Common myeloid progenitor, CD34-positive (primary cell): ENCODE measurements at regions of chr1 and their contacts with region 1.

Region 1: GRCh38 chr1:204446370-204447111 is 34.9 kb upstream of the PPP1R15B start:
- DNase-seq: peak; percentile 80 to 87 (median 81)
- H3K4me3 ChIP-seq: no peak overlapping the region
- H3K27ac ChIP-seq: no peak overlapping the region
- H3K4me1 ChIP-seq: peaks cover 0 to 35% (median 3%) of the 10 kb centered on the region in 4 experiments
- H3K27me3 ChIP-seq: no peaks in the 10 kb centered on the region

Region 2: DNA sequence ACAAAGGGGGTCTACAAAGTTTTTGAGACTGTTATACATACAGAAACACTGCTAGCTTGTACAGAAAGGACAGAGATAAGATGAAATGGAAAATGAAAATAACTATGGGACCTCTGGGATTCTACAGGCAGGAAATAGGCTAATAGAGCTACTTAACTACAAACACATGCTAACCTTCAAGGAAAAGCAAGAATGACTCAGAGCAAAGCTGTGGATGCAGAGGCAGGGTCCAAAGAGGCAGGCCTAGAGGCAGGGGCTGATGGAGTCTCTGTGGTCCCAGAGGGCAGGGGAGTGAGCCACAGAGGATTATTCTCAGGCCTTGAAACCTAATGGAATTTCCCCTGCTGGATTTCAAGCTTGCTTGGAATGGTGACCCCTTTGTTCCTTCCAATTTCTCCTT is 214.0 kb before region 1 on chr1:
- CTCF ChIA-PET with region 1: no interaction called
- POLR2A ChIA-PET with region 1: no interaction called
- DNase-seq: no peak
- H3K4me3 ChIP-seq: no peak overlapping the region
- H3K27ac ChIP-seq: no peak overlapping the region
- H3K4me1 ChIP-seq: no peaks in the 10 kb centered on the region
- H3K27me3 ChIP-seq: no peaks in the 10 kb centered on the region

Region 3: DNA sequence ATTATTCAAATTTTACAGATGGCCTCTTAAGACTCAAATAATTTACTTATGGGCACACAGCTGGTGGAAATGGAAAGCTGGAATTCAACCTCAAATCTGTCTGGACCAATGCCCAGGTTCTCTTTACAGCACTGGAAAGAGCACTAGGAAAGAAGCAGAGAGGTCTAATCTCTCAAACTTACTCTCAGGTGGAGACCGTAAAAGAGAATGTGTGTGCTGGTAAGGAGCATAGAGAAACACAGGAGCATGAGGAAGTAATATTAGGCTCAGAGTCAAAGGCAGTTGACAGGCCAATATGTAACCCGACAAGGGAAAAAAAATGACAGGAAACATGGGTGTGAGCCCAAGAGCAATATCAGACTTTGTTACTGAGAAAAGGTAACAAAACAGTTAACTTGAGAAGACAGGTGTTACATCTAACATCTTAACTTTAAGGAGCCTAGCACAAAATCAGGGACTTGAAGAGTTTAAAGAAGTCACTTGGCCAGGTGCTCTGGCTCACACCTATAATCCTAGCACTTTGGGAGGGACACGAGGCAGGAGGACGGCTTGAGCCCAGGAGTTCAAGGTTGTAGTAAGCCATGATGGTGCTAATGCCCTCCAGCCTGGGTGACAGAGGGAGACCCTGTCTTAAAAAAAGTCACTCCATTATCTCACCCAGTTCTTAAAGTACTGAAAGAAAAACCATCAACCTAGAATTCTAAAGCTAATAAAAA is 55.6 kb before region 1 on chr1:
- CTCF ChIA-PET with region 1: no interaction called
- POLR2A ChIA-PET with region 1: no interaction called
- DNase-seq: peak in 2 of 3 donors; percentile 45 to 60
- H3K4me3 ChIP-seq: peak overlapping the region in 2 of 7 experiments; percentile 11 to 23
- H3K27ac ChIP-seq: peak overlapping the region in 1 of 2 experiments; percentile 6
- H3K4me1 ChIP-seq: peaks cover 8 to 18% (median 12%) of the 10 kb centered on the region in 4 experiments
- H3K27me3 ChIP-seq: no peaks in the 10 kb centered on the region

Region 4: GRCh38 chr1:204431310-204432165 is 15.0 kb before region 1 on chr1:
- CTCF ChIA-PET with region 1: interaction called, 212 read pairs
- POLR2A ChIA-PET with region 1: no interaction called
- DNase-seq: peak; percentile 80 to 91 (median 85)
- H3K4me3 ChIP-seq: no peak overlapping the region
- H3K27ac ChIP-seq: no peak overlapping the region
- H3K4me1 ChIP-seq: no peaks in the 10 kb centered on the region
- H3K27me3 ChIP-seq: no peaks in the 10 kb centered on the region

Region 5: DNA sequence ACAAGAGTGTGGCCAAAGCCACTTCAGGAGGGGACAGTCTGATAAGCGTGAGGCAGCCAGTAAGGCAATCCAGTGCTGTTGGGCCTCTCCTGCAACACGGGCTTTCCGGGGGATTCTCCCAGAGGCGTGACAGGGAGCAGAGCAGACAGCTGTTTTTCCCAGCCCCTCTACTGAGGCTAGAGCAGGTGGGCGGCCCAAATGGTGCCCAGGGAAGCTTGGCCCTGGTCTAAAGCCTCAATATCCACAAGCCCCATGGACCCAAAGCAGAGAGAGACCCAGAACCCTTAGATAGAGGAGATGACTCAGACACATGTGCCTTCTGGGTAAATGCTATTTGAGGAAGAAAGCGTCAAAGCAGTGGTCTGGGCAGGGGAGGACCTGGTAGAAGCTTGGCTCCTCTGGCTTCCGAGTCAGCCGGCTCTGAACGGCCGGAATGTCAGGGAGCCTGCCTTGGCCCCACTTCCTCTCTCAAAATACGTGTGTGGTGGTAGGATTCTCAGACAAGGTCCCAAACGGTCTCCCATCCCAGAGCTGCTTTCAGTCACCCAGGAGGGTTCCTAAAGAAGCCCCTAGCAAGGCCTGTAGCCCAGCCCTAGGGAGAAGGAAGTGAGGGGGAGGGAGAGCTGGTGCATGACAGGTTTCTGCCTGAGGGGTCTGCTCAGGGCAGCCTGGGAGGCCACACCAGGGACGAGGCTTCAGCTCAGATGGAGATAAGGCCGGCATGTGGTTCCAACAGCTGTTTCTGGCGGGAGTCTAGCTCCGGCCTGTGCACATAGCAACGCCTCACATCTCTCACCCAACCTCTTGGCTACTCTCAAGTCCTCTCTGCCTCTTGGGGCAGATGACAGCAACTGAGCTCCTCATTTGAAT is 19.2 kb after region 1 on chr1:
- CTCF ChIA-PET with region 1: interaction called, 236 read pairs
- POLR2A ChIA-PET with region 1: interaction called, 3 read pairs
- DNase-seq: peak; percentile 71 to 90 (median 84)
- H3K4me3 ChIP-seq: peak overlapping the region in 2 of 7 experiments; percentile 11 to 24
- H3K27ac ChIP-seq: peak overlapping the region in 1 of 2 experiments; percentile 1
- H3K4me1 ChIP-seq: peaks cover 12 to 70% (median 64%) of the 10 kb centered on the region in 4 experiments
- H3K27me3 ChIP-seq: no peaks in the 10 kb centered on the region

Region 6: GRCh38 chr1:204480515-204480914 is 34.0 kb after region 1 on chr1:
- CTCF ChIA-PET with region 1: interaction called, 190 read pairs
- POLR2A ChIA-PET with region 1: no interaction called
- DNase-seq: no peak
- H3K4me3 ChIP-seq: no peak overlapping the region
- H3K27ac ChIP-seq: no peak overlapping the region
- H3K4me1 ChIP-seq: peaks cover 8 to 90% (median 51%) of the 10 kb centered on the region in 4 experiments
- H3K27me3 ChIP-seq: no peaks in the 10 kb centered on the region

Region 7: GRCh38 chr1:204487256-204487615 is 40.7 kb after region 1 on chr1:
- CTCF ChIA-PET with region 1: interaction called, 916 read pairs
- POLR2A ChIA-PET with region 1: no interaction called
- DNase-seq: no peak
- H3K4me3 ChIP-seq: no peak overlapping the region
- H3K27ac ChIP-seq: no peak overlapping the region
- H3K4me1 ChIP-seq: peaks cover 2 to 48% (median 12%) of the 10 kb centered on the region in 4 experiments
- H3K27me3 ChIP-seq: no peaks in the 10 kb centered on the region

Region 8: GRCh38 chr1:204494281-204495077 is 47.9 kb after region 1 on chr1 and contains the start of gene PIK3C2B:
- CTCF ChIA-PET with region 1: interaction called, 916 read pairs
- POLR2A ChIA-PET with region 1: interaction called, 8 read pairs
- DNase-seq: peak; percentile 71 to 86 (median 77)
- H3K4me3 ChIP-seq: peak within 1 kb of the TSS; percentile 72 to 95 (median 84)
- H3K27ac ChIP-seq: peak within 1 kb of the TSS in 1 of 2 experiments; percentile 76
- H3K4me1 ChIP-seq: peaks cover 9 to 65% (median 45%) of the 10 kb centered on the region in 4 experiments
- H3K27me3 ChIP-seq: no peaks in the 10 kb centered on the region

Region 9: DNA sequence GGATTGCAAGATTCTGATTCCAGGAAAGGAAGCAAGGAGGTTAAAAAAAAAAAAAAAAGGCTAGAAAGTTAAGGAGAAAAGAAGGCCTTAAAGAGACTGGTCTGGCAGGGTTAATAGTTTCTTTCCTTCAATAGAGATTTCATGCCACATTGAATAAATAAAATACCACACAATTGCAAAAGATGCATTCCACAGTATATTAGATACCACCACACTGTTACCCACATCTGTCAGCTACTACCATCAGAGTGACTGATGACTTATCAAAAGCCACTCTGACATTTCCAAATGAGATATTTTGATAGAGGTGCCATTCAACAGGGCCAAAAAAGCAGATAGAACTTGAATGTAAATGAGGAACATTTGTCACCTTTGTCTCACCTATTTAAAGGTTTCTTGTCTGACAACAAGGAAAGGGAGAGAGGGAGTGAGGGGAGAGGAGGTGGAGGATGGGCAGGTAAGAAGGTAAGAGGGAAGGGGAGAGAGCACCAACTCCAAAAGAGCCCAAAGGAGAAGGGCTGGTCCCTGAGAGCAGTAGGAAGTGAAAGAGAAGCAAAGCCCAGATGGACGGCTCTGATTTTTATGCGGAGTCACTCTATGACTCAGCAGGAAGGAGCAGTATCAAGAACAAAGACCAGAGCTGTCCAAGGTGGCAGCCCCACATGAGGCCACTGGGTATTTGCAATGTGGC is 200.7 kb after region 1 on chr1:
- CTCF ChIA-PET with region 1: no interaction called
- POLR2A ChIA-PET with region 1: no interaction called
- DNase-seq: peak; percentile 73 to 91 (median 91)
- H3K4me3 ChIP-seq: no peak overlapping the region
- H3K27ac ChIP-seq: no peak overlapping the region
- H3K4me1 ChIP-seq: peaks cover 0 to 4% (median 3%) of the 10 kb centered on the region in 4 experiments
- H3K27me3 ChIP-seq: peaks cover 0 to 20% (median 3%) of the 10 kb centered on the region in 5 experiments